OCI-LY7 (cell line): ENCODE measurements at regions of chr3 and their contacts with region 1.

Region 1: DNA sequence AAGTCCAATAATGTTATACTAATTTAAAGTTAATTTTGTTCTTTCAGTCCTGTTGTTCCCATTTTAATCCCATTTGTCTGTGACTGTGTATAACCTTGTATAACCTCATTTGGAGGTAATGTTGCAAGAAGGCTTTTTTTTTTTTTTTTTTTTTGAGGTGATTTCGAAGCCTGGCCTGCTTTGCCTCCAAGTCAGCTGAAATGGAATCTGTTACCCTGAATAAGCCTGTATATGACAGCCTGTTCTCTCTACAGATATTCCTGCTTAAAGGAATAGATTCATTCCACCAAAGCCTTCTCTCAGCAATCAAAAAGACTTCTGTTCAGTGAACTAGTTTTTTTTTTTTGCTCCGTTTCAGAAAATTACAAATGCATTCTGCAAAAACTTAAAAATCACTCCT is 271.8 kb upstream of the UBE2E1 start:
- DNase-seq: no peak
- H3K4me3 ChIP-seq: no peak overlapping the region
- H3K27ac ChIP-seq: no peak overlapping the region
- H3K4me1 ChIP-seq: peaks cover 14% of the 10 kb centered on the region
- CTCF ChIP-seq: no peak

Region 2: GRCh38 chr3:22713936-22714335 is 820.1 kb before region 1 on chr3:
- CTCF ChIA-PET with region 1: no interaction called
- POLR2A ChIA-PET with region 1: no interaction called
- intact Hi-C with region 1: no loop called
- DNase-seq: no peak
- H3K4me3 ChIP-seq: no peak overlapping the region
- H3K27ac ChIP-seq: no peak overlapping the region
- H3K4me1 ChIP-seq: no peaks in the 10 kb centered on the region
- CTCF ChIP-seq: no peak

Region 3: DNA sequence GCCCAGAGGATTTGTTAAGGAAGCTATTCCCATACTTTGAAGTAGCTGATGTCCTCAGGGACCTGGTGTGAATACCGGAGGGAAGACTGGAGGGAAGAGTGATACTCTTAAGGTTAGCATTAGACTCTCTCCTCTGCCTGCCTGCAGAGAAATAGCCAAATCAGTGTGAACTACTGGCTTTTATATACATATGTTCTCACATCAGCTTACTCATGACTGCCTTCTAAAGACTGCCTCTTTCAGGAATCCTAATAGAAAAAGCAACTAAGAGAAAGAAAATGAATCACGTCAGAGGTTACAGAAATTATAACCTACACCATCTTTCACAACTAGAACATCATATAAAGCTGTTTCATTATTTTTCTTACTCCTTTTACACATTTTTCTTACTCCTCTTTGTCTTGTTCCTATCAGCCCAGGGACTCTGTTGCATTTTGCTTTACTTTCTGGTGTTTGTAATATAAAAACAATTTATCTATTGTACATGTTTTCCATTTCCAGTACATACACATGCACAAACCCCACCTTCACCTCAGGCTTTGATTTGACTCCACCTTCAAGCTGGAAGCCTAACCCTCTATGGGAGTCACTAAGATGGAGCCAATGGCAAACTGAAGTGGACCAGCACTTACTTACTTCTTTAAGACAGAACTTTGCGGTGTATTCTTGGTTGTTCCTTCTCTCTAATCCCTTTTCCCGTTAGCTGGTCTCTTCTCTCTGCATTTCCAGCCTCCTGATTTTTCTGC is 14.1 kb after region 1 on chr3:
- CTCF ChIA-PET with region 1: no interaction called
- POLR2A ChIA-PET with region 1: interaction called, 10 read pairs
- intact Hi-C with region 1: no loop called
- DNase-seq: no peak
- H3K4me3 ChIP-seq: no peak overlapping the region
- H3K27ac ChIP-seq: no peak overlapping the region
- H3K4me1 ChIP-seq: peaks cover 19% of the 10 kb centered on the region
- CTCF ChIP-seq: no peak

Region 4: DNA sequence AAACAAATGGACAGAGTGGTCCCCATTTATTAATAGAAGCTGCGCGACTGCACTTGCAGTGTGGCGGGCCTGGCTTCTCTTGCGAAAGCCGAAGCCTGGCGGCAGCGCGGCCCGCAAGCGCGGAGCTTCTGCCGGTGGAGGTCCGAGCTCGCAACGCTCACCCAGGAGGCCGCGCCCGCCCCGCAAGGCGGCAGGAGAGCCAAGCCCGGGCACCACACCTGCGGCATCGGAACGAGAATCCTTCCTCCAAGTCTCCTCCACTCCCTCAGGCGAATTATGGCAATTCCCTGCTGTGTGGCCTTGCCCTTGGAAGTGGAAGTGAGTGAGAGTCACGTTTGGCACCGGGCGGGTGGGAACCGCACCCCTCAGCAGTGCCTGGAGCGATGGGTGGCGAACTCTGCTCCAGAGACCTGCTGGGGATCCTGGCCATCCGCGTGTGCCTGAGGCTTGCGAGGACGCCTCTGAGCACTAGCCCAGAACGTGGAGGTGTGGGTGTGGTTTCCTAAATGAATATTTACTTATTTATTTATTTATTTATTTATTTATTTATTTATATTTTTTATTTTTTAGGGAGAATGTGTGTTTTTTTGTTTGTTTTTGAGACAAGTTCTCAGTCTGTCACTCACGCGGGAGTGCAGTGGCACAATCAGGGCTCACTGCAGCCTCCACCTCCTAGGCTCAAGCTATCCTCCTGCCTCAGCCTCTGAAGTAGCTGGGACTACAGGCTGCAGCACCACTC is 138.0 kb after region 1 on chr3:
- CTCF ChIA-PET with region 1: no interaction called
- POLR2A ChIA-PET with region 1: no interaction called
- intact Hi-C with region 1: no loop called
- DNase-seq: no peak
- H3K4me3 ChIP-seq: no peak overlapping the region
- H3K27ac ChIP-seq: no peak overlapping the region
- H3K4me1 ChIP-seq: peaks cover 7% of the 10 kb centered on the region
- CTCF ChIP-seq: no peak